Prostate gland (tissue), 2 donors: ENCODE measurements at regions of chr15 and their contacts with region 1.

Region 1: GRCh38 chr15:62782039-62782791 is 260.3 kb upstream of the TPM1 start:
- DNase-seq: peak; percentile 90
- H3K4me3 ChIP-seq: no peak overlapping the region
- H3K27ac ChIP-seq: peak overlapping the region in 1 of 2 donors; percentile 32
- H3K4me1 ChIP-seq: no peaks in the 10 kb centered on the region
- H3K27me3 ChIP-seq: no peaks in the 10 kb centered on the region
- CTCF ChIP-seq: peak; percentile 33 to 88 (median 80)
- POLR2A ChIP-seq: no peak

Region 2: GRCh38 chr15:62847900-62848489 is 65.8 kb after region 1 on chr15:
- intact Hi-C with region 1: loop called (anchors 2 kb)
- DNase-seq: no peak
- H3K4me3 ChIP-seq: no peak overlapping the region
- H3K27ac ChIP-seq: no peak overlapping the region
- H3K4me1 ChIP-seq: no peaks in the 10 kb centered on the region
- H3K27me3 ChIP-seq: no peaks in the 10 kb centered on the region
- CTCF ChIP-seq: peak; percentile 14 to 46 (median 42)
- POLR2A ChIP-seq: no peak

Region 3: GRCh38 chr15:62896978-62897647 is 114.9 kb after region 1 on chr15:
- intact Hi-C with region 1: loop called (anchors 5 kb)
- DNase-seq: peak; percentile 82
- H3K4me3 ChIP-seq: no peak overlapping the region
- H3K27ac ChIP-seq: peak overlapping the region; percentile 67 to 72
- H3K4me1 ChIP-seq: peaks cover 15% of the 10 kb centered on the region
- H3K27me3 ChIP-seq: no peaks in the 10 kb centered on the region
- CTCF ChIP-seq: no peak
- POLR2A ChIP-seq: no peak

Region 4: DNA sequence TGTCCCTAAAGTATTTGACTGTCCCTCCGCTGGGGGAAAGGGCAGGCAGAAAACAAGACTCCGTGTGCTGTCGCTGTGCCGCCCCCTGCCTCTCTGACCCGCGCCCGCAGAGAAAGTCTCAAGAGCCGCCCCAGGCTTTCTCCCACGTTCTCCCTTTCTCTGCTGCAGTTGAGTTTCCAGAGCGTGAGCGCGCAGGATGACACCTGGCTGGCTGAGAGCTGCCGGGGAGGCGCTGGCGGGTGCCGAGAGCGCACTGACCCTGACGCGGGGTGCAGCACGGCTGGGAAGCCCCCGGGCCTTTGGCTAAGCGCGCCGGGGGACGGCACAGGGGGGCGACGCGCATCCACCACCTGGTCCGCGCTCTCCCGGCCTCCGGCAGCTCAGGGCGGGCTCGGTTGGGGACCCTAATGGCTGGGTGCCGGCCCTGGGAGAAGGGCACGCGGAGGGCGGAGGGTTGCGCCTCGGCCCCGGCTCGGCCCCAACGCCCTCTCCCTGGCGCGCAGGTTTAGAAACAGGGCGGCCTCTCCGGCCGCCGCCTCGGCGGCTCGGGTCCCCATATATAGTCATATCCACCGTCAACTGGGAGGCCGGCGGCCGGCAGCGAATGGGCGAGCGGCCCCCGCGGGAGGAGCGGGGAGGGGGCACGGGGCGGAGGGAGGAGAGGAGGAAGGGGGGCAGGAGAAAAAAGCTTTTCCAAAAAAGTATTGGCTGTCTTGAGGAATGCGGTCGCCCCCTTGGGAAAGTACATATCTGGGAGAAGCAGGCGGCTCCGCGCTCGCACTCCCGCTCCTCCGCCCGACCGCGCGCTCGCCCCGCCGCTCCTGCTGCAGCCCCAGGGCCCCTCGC is 260.0 kb after region 1 on chr15 and contains the start of gene TPM1:
- intact Hi-C with region 1: loop called (anchors 5 kb)
- DNase-seq: peak; percentile 63
- H3K4me3 ChIP-seq: peak within 1 kb of the TSS; percentile 51 to 58
- H3K27ac ChIP-seq: peak within 1 kb of the TSS; percentile 91 to 95
- H3K4me1 ChIP-seq: peaks cover under 1% of the 10 kb centered on the region
- H3K27me3 ChIP-seq: no peaks in the 10 kb centered on the region
- CTCF ChIP-seq: no peak
- POLR2A ChIP-seq: peak; percentile 26
- total RNA-seq, gene TPM1: 564 to 629 TPM

Region 5: GRCh38 chr15:63093486-63094205 is 311.4 kb after region 1 on chr15:
- intact Hi-C with region 1: loop called (anchors 2 kb)
- DNase-seq: peak; percentile 82
- H3K4me3 ChIP-seq: no peak overlapping the region
- H3K27ac ChIP-seq: no peak overlapping the region
- H3K4me1 ChIP-seq: no peaks in the 10 kb centered on the region
- H3K27me3 ChIP-seq: no peaks in the 10 kb centered on the region
- CTCF ChIP-seq: peak; percentile 73 to 94 (median 92)
- POLR2A ChIP-seq: no peak